A673 (cell line): ENCODE measurements at regions of chr20 and their contacts with region 1.

Region 1: GRCh38 chr20:13587370-13587769 is 51.4 kb downstream of the TASP1 start:
- DNase-seq: no peak
- H3K4me3 ChIP-seq: no peak overlapping the region
- H3K27ac ChIP-seq: peak overlapping the region; percentile 90
- H3K4me1 ChIP-seq: peaks cover 21% of the 10 kb centered on the region
- H3K27me3 ChIP-seq: no peaks in the 10 kb centered on the region
- CTCF ChIP-seq: no peak

Region 2: DNA sequence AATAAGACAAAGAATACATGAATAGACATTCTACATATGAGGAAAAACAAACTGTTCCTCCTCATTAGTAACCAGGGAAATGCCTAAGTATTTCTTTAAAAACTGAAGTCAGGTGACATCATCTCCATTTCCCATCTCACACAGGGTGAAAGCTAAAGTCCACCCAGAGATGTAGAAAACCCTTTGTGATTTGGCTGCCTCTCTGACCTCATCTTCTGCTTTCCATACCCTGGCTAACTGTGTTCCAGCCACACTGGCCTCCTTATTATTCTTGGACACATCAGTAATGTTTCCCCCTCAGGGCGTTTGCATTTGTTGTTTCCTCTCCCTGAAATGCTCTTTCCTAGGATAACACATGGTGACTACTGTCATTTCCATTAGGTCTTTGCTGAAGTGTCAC is 157.0 kb after region 1 on chr20:
- CTCF ChIA-PET with region 1: no interaction called
- POLR2A ChIA-PET with region 1: no interaction called
- intact Hi-C with region 1: no loop called
- DNase-seq: no peak
- H3K4me3 ChIP-seq: no peak overlapping the region
- H3K27ac ChIP-seq: no peak overlapping the region
- H3K4me1 ChIP-seq: no peaks in the 10 kb centered on the region
- H3K27me3 ChIP-seq: no peaks in the 10 kb centered on the region
- CTCF ChIP-seq: no peak

Region 3: GRCh38 chr20:15071085-15071808 is 1483.9 kb after region 1 on chr20:
- CTCF ChIA-PET with region 1: no interaction called
- POLR2A ChIA-PET with region 1: interaction called, 18 read pairs
- intact Hi-C with region 1: no loop called
- DNase-seq: no peak
- H3K4me3 ChIP-seq: no peak overlapping the region
- H3K27ac ChIP-seq: no peak overlapping the region
- H3K4me1 ChIP-seq: no peaks in the 10 kb centered on the region
- H3K27me3 ChIP-seq: no peaks in the 10 kb centered on the region
- CTCF ChIP-seq: no peak